ENCODE measurements at regions of chr12 and their contacts with region 1.

Region 1: GRCh38 chr12:119208622-119209061 is 29.9 kb downstream of the HSPB8 start:
- DNase-seq: peak; percentile 94
- H3K4me3 ChIP-seq: no peak overlapping the region
- H3K27ac ChIP-seq: peak overlapping the region; percentile 70 to 99 (median 82)
- H3K4me1 ChIP-seq: peaks cover 0 to 57% (median 43%) of the 10 kb centered on the region in 4 donors
- H3K27me3 ChIP-seq: no peaks in the 10 kb centered on the region
- CTCF ChIP-seq: no peak
- EP300 ChIP-seq: peak in 3 of 4 donors; percentile 47 to 72 (median 64)
- POLR2A ChIP-seq: no peak

Region 2: GRCh38 chr12:119319638-119320037 is 111.0 kb after region 1 on chr12:
- intact Hi-C with region 1: loop called (anchors 2 kb)
- DNase-seq: peak; percentile 89
- H3K4me3 ChIP-seq: no peak overlapping the region
- H3K27ac ChIP-seq: peak overlapping the region in 3 of 4 donors; percentile 80 to 82 (median 82)
- H3K4me1 ChIP-seq: peaks cover 0 to 42% (median 28%) of the 10 kb centered on the region in 4 donors
- H3K27me3 ChIP-seq: no peaks in the 10 kb centered on the region
- CTCF ChIP-seq: peak in 1 of 4 experiments; percentile 16
- EP300 ChIP-seq: peak in 2 of 4 donors; percentile 35 to 44
- POLR2A ChIP-seq: no peak